ENCODE measurements at regions of chr6 and their contacts with region 1.

Region 1: DNA sequence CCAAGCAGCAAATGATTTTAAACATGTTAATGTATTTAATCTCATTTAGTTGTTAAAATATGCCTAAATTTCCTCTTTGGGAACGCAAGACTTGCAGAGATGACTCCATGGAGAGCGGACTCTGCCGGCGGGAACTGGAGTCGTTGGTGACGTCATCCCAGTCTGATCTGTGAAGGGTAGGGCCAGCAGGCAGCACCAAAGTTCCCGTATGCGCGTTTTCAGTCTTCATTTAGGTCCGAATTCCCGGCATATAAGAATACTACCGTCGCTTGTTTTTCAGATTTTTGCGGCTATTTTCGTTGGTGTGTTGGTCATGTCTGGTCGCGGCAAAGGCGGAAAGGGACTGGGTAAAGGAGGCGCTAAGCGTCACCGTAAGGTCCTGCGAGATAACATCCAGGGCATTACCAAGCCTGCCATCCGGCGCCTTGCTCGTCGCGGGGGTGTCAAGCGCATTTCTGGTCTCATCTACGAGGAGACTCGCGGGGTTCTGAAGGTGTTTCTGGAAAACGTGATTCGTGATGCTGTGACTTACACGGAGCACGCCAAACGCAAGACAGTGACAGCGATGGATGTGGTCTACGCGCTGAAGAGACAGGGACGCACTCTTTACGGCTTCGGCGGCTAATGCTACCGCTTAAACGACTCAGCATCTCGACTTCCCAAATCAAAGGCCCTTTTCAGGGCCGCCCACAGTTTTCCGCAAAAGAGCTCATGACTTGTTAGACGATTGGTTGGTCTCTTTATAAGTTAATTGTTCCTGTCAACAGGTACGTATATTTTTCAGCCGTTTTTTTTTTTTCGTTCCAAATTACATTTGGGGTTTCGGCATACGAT is 117.3 kb downstream of the HFE start:
- DNase-seq: peak; percentile 75 to 95 (median 87)
- H3K4me3 ChIP-seq: peak overlapping the region; percentile 73
- H3K4me3 Mint-ChIP-seq: no peak overlapping the region
- H3K27ac ChIP-seq: peak overlapping the region; percentile 99
- H3K27ac Mint-ChIP-seq: no peak overlapping the region
- H3K4me1 ChIP-seq: peaks cover 31% of the 10 kb centered on the region
- H3K4me1 Mint-ChIP-seq: peaks cover 18 to 31% (median 20%) of the 10 kb centered on the region in 3 donors
- H3K27me3 ChIP-seq: no peaks in the 10 kb centered on the region
- H3K27me3 Mint-ChIP-seq: peaks cover 0 to 8% of the 10 kb centered on the region in 2 donors

Region 2: DNA sequence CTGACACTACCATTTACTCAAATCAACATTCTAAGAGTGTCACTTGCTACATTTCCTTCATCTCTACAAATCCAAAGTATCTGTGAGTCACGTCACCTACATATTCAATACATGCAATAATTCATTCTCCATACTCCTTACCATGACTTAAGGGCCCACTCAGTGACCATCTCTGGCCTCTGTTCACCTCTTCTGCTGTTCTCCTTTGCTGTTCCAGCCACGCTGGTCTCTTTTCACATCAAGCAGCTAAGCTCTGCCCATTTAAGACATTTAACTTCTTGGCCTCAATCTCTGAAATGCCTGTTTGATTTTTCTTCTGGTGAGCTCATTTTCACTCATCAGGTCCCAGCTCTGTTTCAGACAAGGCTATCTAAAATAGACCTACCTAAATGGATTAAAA is 70.8 kb before region 1 on chr6:
- CTCF ChIA-PET with region 1: no interaction called
- POLR2A ChIA-PET with region 1: no interaction called
- DNase-seq: no peak
- H3K4me3 ChIP-seq: no peak overlapping the region
- H3K4me3 Mint-ChIP-seq: no peak overlapping the region
- H3K27ac ChIP-seq: no peak overlapping the region
- H3K27ac Mint-ChIP-seq: peak overlapping the region in 3 of 8 donors; percentile 4 to 21 (median 17)
- H3K4me1 ChIP-seq: peaks cover 14% of the 10 kb centered on the region
- H3K4me1 Mint-ChIP-seq: peaks cover 22 to 60% (median 53%) of the 10 kb centered on the region in 3 donors
- H3K27me3 ChIP-seq: no peaks in the 10 kb centered on the region
- H3K27me3 Mint-ChIP-seq: no peaks in the 10 kb centered on the region

Region 3: DNA sequence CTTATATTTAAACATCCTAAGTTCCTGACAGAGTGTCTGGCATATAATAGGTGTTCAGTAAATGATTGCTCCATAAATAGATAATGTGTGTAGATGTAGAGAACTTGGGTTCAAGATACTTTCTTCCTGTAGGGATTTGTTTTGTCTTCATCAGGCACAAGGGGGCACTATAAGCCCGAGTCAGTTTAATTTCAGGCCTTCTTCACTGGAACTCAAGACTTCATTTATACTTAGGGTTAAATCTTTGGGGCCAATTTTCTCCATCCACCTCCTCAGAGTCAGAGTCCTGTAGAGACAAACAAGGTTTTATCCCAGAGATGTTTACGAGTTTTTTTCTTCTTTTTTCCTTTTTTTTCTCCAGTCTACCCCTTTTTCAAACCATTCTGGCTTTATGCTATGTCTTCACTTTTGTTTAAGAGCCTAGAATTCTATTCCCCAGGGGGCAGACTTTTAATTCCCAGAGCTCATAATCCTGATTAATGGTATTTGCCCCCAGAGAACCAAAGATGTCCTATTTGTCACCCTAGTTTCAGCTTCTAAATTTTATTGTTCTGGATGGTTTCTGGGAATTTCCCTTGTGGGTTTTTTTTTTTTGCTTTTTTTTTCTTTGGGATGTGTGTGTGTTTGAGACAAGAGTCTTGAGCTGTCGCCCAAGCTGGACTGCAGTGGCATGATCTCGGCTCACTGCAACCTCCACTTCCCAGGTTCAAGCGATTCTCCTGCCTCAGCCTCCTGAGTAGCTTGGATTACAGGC is 28.9 kb before region 1 on chr6:
- CTCF ChIA-PET with region 1: interaction called, 10 read pairs
- POLR2A ChIA-PET with region 1: interaction called, 109 read pairs
- DNase-seq: peak; percentile 8 to 63 (median 52)
- H3K4me3 ChIP-seq: no peak overlapping the region
- H3K4me3 Mint-ChIP-seq: peak overlapping the region in 2 of 7 donors; percentile 21 to 75
- H3K27ac ChIP-seq: no peak overlapping the region
- H3K27ac Mint-ChIP-seq: peak overlapping the region; percentile 8 to 89 (median 78)
- H3K4me1 ChIP-seq: peaks cover 36% of the 10 kb centered on the region
- H3K4me1 Mint-ChIP-seq: peaks cover 30 to 44% (median 40%) of the 10 kb centered on the region in 3 donors
- H3K27me3 ChIP-seq: no peaks in the 10 kb centered on the region
- H3K27me3 Mint-ChIP-seq: peaks cover 0 to 3% of the 10 kb centered on the region in 2 donors

Region 4: DNA sequence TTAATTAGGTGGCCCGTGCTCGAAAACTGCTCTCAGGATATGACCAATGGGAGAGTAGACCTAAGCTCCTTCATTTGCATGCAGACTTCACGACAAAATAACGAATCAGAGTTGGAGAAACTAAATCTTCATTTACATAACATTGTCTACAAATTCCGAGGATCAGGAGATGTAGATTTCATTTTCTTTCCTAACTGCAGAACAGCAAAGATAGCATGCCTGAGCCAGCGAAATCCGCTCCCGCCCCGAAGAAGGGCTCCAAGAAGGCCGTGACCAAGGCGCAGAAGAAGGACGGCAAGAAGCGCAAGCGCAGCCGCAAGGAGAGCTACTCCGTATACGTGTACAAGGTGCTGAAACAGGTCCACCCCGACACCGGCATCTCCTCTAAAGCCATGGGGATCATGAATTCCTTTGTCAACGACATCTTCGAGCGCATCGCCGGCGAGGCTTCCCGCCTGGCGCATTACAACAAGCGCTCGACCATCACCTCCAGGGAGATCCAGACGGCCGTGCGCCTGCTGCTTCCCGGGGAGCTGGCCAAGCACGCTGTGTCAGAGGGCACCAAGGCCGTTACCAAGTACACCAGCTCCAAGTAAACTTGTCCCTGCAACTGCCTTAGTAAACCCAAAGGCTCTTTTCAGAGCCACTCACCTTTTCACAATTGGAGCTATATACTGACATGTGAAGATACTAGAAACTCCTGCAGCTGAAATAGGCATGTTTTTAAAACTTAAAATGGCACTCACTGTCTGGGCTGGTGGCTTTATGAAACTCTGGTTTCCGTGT is 20.8 kb before region 1 on chr6:
- CTCF ChIA-PET with region 1: interaction called, 67 read pairs
- POLR2A ChIA-PET with region 1: interaction called, 201 read pairs
- DNase-seq: peak; percentile 31 to 78 (median 72)
- H3K4me3 ChIP-seq: peak overlapping the region; percentile 81
- H3K4me3 Mint-ChIP-seq: peak overlapping the region; percentile 86 to 99 (median 97)
- H3K27ac ChIP-seq: peak overlapping the region; percentile 71
- H3K27ac Mint-ChIP-seq: peak overlapping the region; percentile 71 to 99 (median 96)
- H3K4me1 ChIP-seq: peaks cover 33% of the 10 kb centered on the region
- H3K4me1 Mint-ChIP-seq: peaks cover 41 to 53% (median 44%) of the 10 kb centered on the region in 3 donors
- H3K27me3 ChIP-seq: no peaks in the 10 kb centered on the region
- H3K27me3 Mint-ChIP-seq: no peaks in the 10 kb centered on the region

Region 5: DNA sequence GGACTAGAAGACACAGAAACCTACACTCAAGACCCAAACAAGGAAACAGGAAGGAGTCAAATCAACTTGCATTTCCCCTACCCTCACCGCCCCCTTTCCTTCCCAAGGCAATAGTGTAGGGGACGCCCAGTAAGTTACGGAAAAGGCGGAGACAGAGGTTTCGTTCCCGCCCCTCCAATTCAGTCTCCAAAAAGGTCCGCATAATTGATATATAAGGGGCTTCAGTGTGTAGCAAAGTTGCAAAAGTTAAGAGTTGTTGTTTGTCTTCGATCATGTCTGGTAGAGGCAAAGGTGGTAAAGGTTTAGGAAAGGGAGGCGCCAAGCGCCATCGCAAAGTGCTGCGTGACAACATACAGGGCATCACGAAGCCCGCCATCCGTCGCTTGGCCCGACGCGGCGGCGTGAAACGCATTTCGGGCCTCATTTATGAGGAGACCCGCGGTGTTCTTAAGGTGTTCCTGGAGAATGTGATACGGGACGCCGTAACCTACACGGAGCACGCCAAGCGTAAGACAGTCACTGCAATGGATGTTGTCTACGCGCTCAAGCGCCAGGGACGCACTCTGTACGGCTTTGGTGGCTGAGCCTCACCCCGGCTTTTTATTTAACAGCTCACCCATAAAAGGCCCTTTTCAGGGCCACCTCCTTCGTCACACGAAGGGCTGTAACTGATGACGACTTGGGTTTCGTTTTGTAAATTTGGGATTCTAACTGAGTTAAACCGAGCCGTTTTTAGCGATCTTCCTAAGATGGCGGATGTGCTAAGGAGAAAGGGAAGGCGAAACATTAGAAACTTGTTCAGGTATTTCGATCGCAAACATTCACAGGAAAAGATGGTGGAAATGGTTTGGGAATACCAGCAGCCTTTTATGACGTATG is 35.8 kb after region 1 on chr6:
- CTCF ChIA-PET with region 1: interaction called, 51 read pairs
- POLR2A ChIA-PET with region 1: interaction called, 192 read pairs
- DNase-seq: peak; percentile 44 to 82 (median 81)
- H3K4me3 ChIP-seq: peak overlapping the region; percentile 63
- H3K4me3 Mint-ChIP-seq: peak overlapping the region; percentile 82 to 93 (median 85)
- H3K27ac ChIP-seq: peak overlapping the region; percentile 85
- H3K27ac Mint-ChIP-seq: peak overlapping the region; percentile 94 to 99 (median 96)
- H3K4me1 ChIP-seq: peaks cover 13% of the 10 kb centered on the region
- H3K4me1 Mint-ChIP-seq: peaks cover 19 to 31% (median 31%) of the 10 kb centered on the region in 3 donors
- H3K27me3 ChIP-seq: no peaks in the 10 kb centered on the region
- H3K27me3 Mint-ChIP-seq: no peaks in the 10 kb centered on the region